Head of caudate nucleus (tissue), 42 donors: ENCODE measurements at regions of chr4 and their contacts with region 1.

Region 1: DNA sequence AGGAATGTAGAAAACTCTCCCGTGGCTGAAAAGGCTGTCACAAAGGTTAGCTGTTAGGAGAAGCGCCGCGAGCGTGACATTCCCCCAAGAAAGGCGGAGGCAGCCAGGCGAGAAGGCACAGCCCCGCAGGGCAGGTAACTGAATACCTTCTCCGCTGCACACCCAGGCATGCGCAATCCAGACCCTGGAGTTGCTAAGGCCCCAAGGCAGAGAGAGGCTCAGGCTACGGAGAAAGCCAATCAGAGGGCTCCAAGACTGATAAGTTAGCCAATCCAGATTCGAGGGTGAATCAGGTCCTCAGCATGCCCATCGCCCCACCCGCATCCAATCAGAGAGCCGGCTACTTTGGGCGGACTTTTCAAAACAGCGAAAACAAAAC is 485 bp upstream of the CCNG2 start:
- DNase-seq: peak; percentile 91 to 99 (median 98)

Region 2: GRCh38 chr4:77075869-77076799 is 80.4 kb before region 1 on chr4 and contains the start of gene CCNI:
- intact Hi-C with region 1: loop called (anchors 5 kb)
- DNase-seq: peak; percentile 85 to 97 (median 94)

Region 3: DNA sequence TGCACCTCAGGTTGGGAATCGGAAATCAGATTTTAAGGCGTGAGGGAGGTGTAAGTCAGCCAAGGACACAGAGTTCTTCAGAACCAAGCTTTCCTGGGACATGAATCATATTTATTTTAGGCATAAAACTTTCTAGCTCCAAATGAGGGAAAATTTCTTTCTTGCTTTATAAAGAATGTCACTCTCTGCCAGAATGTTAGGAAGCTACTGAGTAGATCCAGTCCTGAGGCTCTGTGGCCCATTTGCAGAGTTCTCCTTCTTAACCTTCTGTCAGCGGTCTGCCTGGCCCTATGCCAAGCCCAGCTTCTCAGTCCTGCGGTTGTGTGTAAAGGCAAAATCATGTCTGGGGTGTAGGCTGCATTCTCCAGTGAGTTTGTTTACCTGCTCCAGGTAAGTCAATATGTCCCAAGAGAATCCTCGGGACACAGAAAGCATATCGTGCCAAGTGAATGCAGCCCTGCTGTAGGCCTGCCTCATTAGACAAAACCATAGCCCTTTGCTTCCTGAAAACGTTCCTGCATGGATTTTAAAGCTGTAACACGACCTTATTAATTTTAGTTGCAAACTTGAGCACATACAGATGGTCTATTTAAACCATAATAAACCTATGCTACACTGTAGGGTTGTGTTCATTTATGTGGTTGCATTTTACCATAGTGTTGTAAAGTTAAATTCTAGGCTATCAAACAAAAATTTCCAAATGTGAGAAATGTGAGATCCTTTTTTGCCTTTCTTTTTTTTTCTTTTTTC is 51.6 kb before region 1 on chr4:
- intact Hi-C with region 1: no loop called
- DNase-seq: peak in 41 of 42 donors; percentile 10 to 73 (median 41)